ENCODE measurements at regions of chr1 and their contacts with region 1.

Region 1: DNA sequence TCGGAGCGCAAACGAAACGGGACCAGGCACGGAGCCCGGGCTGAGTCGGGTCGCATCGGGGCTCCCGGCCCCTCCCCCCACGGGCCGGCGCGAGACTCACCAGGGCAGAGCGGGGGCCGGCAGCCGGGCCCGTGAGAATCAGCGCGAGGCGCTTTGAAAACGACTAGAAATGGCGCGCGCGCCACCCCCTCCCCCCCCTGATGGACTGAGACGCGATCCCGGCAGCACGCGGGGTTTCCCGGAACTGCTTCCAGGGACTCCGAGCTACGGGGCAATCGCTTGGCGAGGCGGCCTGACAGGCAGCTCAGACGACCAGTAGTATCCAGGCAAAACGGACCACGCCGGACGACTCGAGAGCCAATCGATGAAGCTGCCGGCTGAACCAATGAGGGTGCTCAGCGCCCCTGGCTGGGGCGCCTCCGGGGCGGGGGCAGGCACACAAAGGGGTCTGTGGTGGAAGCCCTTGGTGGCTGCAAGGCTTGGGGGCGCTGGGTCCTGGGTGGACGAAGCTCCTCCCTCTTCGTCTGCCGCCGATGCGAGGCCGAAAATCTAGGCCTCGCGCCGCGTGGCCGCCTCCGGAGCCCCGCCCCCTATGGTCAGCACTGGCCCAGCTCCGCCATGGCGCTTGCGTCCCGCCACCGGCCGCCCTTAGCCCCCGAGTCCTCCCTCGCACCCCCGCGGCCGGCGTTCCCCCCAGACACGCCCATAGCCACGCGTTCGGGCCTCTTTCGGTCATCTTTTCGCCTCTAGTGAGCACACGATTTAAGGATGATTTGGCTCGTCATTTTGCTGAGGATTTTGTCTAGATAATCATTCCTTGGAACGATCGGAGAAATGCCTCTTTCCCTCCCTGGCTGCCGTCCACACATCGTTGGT is at the start of gene HNRNPR:
- DNase-seq: peak; percentile 100
- ATAC-seq: peak; percentile 97
- H3K4me3 Mint-ChIP-seq: peak within 1 kb of the TSS; percentile 85
- H3K27ac Mint-ChIP-seq: peak within 1 kb of the TSS; percentile 96
- H3K4me1 Mint-ChIP-seq: peaks cover 35% of the 10 kb centered on the region
- H3K27me3 Mint-ChIP-seq: no peaks in the 10 kb centered on the region
- total RNA-seq, gene HNRNPR: 190 to 210 TPM

Region 2: DNA sequence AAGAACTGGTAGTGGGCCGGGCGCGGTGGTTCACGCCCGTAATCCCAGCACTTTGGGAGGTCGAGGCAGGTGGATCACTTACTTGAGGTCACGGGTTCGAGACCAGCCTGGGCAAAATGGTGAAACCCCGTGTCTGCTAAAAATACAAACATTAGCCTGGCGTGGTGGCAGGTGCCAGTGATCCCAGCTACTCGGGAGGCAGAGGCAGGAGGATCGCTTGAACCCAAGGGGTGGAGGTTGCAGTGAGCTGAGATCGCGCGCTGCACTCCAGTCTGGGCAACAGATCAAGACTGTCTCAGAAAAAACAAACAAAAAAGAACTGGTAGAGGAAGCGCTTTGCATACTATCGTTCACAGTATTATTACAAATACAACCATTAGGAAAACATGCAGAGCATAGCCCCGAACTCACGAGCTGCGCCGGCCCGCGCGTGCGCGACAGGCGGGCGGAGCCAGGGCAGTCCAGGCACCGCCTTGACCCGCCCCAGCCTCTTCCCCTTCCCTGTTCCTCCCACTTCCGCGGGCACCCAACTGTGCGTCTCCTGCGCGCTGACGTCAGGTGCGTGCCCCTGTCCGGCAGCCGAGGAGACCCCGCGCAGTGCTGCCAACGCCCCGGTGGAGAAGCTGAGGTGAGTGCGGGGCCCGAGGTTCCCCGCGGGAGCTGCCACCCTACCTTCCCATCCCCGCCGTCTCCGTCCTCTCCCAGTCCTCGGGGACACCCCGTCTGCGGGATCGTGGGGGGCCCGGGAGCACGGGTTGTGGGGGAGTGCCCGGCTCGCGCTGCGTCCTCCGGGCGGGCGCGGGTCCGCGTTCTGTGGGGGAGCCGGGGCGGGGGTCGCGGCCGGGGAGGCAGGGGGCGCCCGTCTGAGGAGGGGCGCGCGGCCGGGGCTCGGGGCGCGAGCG is 1292.0 kb before region 1 on chr1 and contains the start of gene CDC42:
- CTCF ChIA-PET with region 1: no interaction called
- POLR2A ChIA-PET with region 1: no interaction called
- intact Hi-C with region 1: loop called in 1 of 2 experiments (anchors 10 kb)
- DNase-seq: peak; percentile 98
- ATAC-seq: peak; percentile 86
- H3K4me3 Mint-ChIP-seq: peak within 1 kb of the TSS; percentile 96
- H3K27ac Mint-ChIP-seq: peak within 1 kb of the TSS; percentile 98
- H3K4me1 Mint-ChIP-seq: peaks cover 56% of the 10 kb centered on the region
- H3K27me3 Mint-ChIP-seq: no peaks in the 10 kb centered on the region
- total RNA-seq, gene CDC42: 298 to 339 TPM

Region 3: GRCh38 chr1:23168457-23169194 is 175.7 kb before region 1 on chr1 and contains the start of gene LUZP1:
- CTCF ChIA-PET with region 1: no interaction called
- POLR2A ChIA-PET with region 1: no interaction called
- intact Hi-C with region 1: loop called in 1 of 2 experiments (anchors 1 kb)
- DNase-seq: peak; percentile 94
- ATAC-seq: peak; percentile 85
- H3K4me3 Mint-ChIP-seq: peak within 1 kb of the TSS; percentile 97
- H3K27ac Mint-ChIP-seq: peak within 1 kb of the TSS; percentile 86
- H3K4me1 Mint-ChIP-seq: peaks cover 27% of the 10 kb centered on the region
- H3K27me3 Mint-ChIP-seq: no peaks in the 10 kb centered on the region
- total RNA-seq, gene LUZP1: 13.2 to 13.6 TPM

Region 4: GRCh38 chr1:23242414-23242813 is 101.9 kb before region 1 on chr1:
- CTCF ChIA-PET with region 1: no interaction called
- POLR2A ChIA-PET with region 1: no interaction called
- intact Hi-C with region 1: no loop called
- DNase-seq: no peak
- ATAC-seq: no peak
- H3K4me3 Mint-ChIP-seq: no peak overlapping the region
- H3K27ac Mint-ChIP-seq: no peak overlapping the region
- H3K4me1 Mint-ChIP-seq: no peaks in the 10 kb centered on the region
- H3K27me3 Mint-ChIP-seq: peaks cover 2% of the 10 kb centered on the region

Region 5: DNA sequence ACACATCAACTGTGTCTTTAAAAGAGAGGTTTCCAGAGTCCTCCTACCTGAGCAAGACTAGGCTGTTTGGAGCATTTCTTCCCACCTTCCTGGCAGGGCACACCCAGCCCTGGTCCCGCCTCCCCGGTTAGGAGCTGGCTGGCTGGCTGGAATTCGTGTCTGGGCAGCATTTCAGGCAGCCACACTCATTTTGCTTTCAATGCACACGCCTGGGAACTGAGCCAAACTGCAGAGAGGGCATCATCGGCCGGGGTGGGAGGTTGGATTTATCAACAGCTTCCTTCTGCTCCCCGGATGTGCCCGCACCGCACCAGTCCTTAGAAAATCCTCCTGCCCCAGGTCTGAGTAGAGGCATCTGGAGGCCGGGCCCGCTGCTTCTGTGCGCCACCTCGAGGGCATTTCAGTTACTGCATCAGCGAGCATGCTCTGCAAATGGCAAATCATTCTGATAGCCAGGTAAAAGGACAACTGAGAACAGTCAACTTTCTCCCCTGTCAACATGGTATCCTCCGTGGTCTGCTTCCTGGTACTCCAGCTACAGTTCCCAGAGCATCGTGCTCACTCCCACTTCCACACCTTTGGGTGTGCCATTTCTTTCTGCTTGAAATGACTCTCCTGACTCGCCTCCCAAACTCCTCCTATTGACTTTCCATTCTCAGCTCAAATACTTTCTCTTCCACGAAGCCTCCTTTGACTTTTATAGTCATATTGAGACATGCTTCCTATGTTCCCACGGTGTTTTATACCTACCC is 59.6 kb after region 1 on chr1:
- CTCF ChIA-PET with region 1: interaction called, 19 read pairs
- POLR2A ChIA-PET with region 1: interaction called, 5 read pairs
- intact Hi-C with region 1: loop called (anchors 2 kb)
- DNase-seq: peak; percentile 94
- ATAC-seq: peak; percentile 98
- H3K4me3 Mint-ChIP-seq: no peak overlapping the region
- H3K27ac Mint-ChIP-seq: no peak overlapping the region
- H3K4me1 Mint-ChIP-seq: peaks cover 10% of the 10 kb centered on the region
- H3K27me3 Mint-ChIP-seq: no peaks in the 10 kb centered on the region

Region 6: GRCh38 chr1:23530747-23531561 is 186.6 kb after region 1 on chr1 and contains the start of gene E2F2:
- CTCF ChIA-PET with region 1: interaction called, 3 read pairs
- POLR2A ChIA-PET with region 1: interaction called, 8 read pairs
- intact Hi-C with region 1: loop called in 1 of 2 experiments (anchors 1 kb)
- DNase-seq: peak; percentile 91
- ATAC-seq: peak; percentile 81
- H3K4me3 Mint-ChIP-seq: peak within 1 kb of the TSS; percentile 84
- H3K27ac Mint-ChIP-seq: peak within 1 kb of the TSS; percentile 95
- H3K4me1 Mint-ChIP-seq: peaks cover 68% of the 10 kb centered on the region
- H3K27me3 Mint-ChIP-seq: no peaks in the 10 kb centered on the region
- total RNA-seq, gene E2F2: 25.0 to 32.0 TPM

Region 7: GRCh38 chr1:23691499-23692307 is 347.4 kb after region 1 on chr1 and contains the start of gene RPL11:
- CTCF ChIA-PET with region 1: no interaction called
- POLR2A ChIA-PET with region 1: interaction called, 15 read pairs
- intact Hi-C with region 1: loop called in 1 of 2 experiments (anchors 1 kb)
- DNase-seq: peak; percentile 93
- ATAC-seq: peak; percentile 98
- H3K4me3 Mint-ChIP-seq: peak within 1 kb of the TSS; percentile 97
- H3K27ac Mint-ChIP-seq: peak within 1 kb of the TSS; percentile 98
- H3K4me1 Mint-ChIP-seq: peaks cover 43% of the 10 kb centered on the region
- H3K27me3 Mint-ChIP-seq: peaks cover under 1% of the 10 kb centered on the region
- total RNA-seq, gene RPL11: 1,003 to 1,481 TPM

Region 8: GRCh38 chr1:23908493-23909341 is 564.4 kb after region 1 on chr1:
- CTCF ChIA-PET with region 1: no interaction called
- POLR2A ChIA-PET with region 1: no interaction called
- intact Hi-C with region 1: no loop called
- DNase-seq: peak; percentile 19
- ATAC-seq: no peak
- H3K4me3 Mint-ChIP-seq: no peak overlapping the region
- H3K27ac Mint-ChIP-seq: no peak overlapping the region
- H3K4me1 Mint-ChIP-seq: peaks cover 28% of the 10 kb centered on the region
- H3K27me3 Mint-ChIP-seq: peaks cover 25% of the 10 kb centered on the region

Region 9: DNA sequence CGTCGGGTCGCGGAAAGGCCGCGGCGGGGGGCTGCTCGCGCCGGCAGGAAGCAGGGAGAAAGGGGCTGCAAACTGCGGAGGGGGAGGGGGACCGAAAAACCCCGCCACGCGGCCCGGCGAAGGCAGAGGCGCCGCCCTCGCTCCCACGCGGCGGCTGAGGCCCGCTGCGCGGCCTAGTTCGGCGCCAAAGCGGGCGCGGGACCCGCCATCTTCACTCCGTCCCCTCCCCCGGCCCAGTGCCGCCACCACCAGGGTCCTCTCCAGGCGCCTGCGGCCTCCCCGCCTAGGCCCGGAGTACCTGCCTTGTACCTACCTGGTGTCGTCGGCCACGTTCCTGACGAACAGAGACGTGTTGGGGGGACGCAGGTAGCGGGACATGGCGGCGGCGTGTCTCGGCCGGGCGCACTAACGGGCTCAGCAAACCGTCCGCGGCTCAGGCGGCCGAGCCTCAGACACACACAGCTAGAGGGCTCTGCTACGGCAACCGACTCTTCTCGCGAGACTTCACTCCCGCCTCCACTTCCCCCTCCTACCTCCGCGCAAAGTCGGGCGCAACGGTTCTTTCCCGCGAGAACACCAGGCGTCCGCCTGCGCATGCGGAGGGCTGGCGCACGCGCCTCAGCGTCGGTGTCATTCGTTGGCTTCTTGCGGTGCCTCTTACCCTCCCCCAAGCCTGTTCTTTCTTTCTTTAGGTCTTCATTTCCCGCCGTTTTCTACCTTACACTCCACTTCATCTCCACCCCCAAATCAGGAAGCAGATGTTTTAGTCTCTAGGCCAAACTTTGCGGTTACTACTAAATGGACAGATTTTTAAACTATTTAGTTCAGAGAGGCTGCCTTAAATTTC is 635.8 kb after region 1 on chr1 and contains the start of gene SRSF10:
- CTCF ChIA-PET with region 1: no interaction called
- POLR2A ChIA-PET with region 1: no interaction called
- intact Hi-C with region 1: loop called in 1 of 2 experiments (anchors 1 kb)
- DNase-seq: peak; percentile 99
- ATAC-seq: peak; percentile 94
- H3K4me3 Mint-ChIP-seq: peak within 1 kb of the TSS; percentile 97
- H3K27ac Mint-ChIP-seq: peak within 1 kb of the TSS; percentile 100
- H3K4me1 Mint-ChIP-seq: peaks cover 38% of the 10 kb centered on the region
- H3K27me3 Mint-ChIP-seq: no peaks in the 10 kb centered on the region
- total RNA-seq, gene SRSF10: 213 to 225 TPM